ENCODE measurements at regions of chr19 and their contacts with region 1.

Region 1: DNA sequence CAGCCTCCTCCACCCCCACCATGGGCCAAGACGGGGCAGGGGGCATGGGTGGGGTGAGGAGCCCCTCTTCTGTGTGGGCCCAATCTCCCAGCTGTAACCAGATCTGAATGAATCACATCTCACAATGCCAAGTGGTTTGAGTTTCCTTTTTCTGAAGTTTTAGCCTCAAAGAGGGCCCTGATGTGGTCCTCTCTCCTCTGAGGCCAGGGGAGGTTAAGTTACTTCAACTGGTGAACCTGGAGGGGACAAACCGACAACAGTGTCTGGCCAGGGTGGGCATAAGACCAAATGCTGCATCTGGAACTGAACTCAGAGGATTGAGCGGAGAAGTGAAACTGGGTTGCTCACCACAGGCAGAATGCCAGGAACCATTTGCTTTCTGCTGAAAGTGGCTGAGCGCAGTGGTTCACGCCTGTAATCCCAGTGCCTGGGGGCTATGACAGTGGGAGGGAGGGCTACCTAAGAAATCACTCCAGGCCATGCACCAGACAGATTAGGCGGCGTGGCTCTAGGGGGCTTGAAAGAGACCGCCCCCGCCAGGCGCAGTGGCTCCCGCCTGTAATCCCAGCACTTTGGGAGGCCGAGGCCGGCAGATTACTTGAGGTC is 15.4 kb upstream of the IRGC start:
- DNase-seq: peak; percentile 7 to 31
- ATAC-seq: peak; percentile 56 to 60
- H3K4me3 ChIP-seq: peak overlapping the region in 3 of 4 donors; percentile 36 to 43 (median 37)
- H3K27ac ChIP-seq: peak overlapping the region; percentile 45 to 82 (median 60)
- H3K4me1 ChIP-seq: peaks cover 0 to 7% of the 10 kb centered on the region in 2 donors
- H3K27me3 ChIP-seq: peaks cover 4 to 11% (median 9%) of the 10 kb centered on the region in 3 donors
- CTCF ChIP-seq: no peak
- POLR2A ChIP-seq: no peak

Region 2: GRCh38 chr19:43668406-43669158 is 31.9 kb before region 1 on chr19:
- in situ Hi-C with region 1: no loop called
- intact Hi-C with region 1: loop called (anchors 2 kb)
- DNase-seq: peak; percentile 92 to 93
- ATAC-seq: peak; percentile 94
- H3K4me3 ChIP-seq: peak overlapping the region; percentile 50 to 68 (median 60)
- H3K27ac ChIP-seq: peak overlapping the region; percentile 74 to 87 (median 86)
- H3K4me1 ChIP-seq: peaks cover 2 to 5% of the 10 kb centered on the region in 2 donors
- H3K27me3 ChIP-seq: peaks cover 15 to 35% (median 27%) of the 10 kb centered on the region in 3 donors
- CTCF ChIP-seq: no peak
- POLR2A ChIP-seq: peak; percentile 54 to 84

Region 3: GRCh38 chr19:43723588-43723987 is 23.1 kb after region 1 on chr19:
- in situ Hi-C with region 1: no loop called
- intact Hi-C with region 1: no loop called
- DNase-seq: no peak
- ATAC-seq: no peak
- H3K4me3 ChIP-seq: no peak overlapping the region
- H3K27ac ChIP-seq: no peak overlapping the region
- H3K4me1 ChIP-seq: peaks cover 0 to 9% of the 10 kb centered on the region in 2 donors
- H3K27me3 ChIP-seq: no peaks in the 10 kb centered on the region
- CTCF ChIP-seq: no peak
- POLR2A ChIP-seq: no peak